HepG2 (cell line): ENCODE measurements at regions of chr16 and their contacts with region 1.

Region 1: DNA sequence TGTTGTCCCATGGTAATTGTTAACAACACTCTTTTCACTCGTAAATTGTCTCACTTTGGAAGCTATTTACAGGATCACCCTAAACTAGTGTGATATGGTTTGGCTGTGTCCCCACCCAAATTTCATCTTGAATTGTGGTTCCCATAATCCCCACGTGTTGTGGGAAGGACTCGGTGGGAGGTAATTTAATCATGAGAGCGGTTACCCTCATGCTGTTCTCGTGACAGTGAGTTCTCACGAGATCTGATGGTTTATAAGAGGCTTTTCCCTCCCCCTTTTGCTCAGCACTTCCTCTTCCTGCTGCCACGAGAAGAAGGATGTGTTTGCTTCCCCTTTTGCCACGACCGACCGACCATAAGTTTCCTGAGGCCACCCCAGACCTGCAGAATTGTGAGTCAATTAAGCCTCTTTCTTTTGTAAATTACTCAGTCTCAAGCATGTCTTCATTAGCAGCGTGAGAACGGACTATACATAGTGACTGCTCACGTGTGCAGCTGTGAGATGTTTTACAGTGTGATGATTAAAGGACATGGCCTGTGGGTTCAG is 34.4 kb downstream of the DNAH3 start:
- DNase-seq: peak; percentile 52
- ATAC-seq: peak; percentile 60
- H3K4me3 ChIP-seq: peak overlapping the region; percentile 25 to 55 (median 45); a peak in 5 of 6 replicates
- H3K27ac ChIP-seq: no peak overlapping the region
- H3K4me1 ChIP-seq: peaks cover 11% of the 10 kb centered on the region
- H3K27me3 ChIP-seq: peaks cover 3 to 12% of the 10 kb centered on the region in 2 experiments; a peak in 2 of 5 replicates
- CTCF ChIP-seq: no peak
- EP300 ChIP-seq: no peak
- POLR2A ChIP-seq: peak; percentile 40 to 55; a peak in 3 of 4 replicates
- RAD21 ChIP-seq: no peak

Region 2: DNA sequence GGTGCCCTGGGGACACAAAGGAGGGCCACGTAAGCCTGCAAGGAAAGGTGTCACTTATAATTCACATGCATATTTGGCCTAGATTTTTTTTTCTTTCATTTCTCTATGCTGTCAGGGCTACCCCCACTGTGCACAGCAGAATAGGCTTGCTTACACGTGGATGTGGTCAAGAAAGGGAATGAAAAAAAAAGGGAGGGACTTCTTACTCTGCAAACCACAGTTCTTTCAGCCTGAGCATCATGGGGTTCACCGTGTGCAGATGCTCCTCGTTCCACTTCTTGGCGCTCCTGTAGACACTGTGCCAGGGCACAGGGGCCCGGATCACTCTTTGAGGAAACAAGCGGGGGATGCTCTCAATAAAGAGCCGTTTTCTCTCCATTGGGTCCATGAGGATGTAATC is 17.8 kb after region 1 on chr16:
- CTCF ChIA-PET with region 1: no interaction called
- POLR2A ChIA-PET with region 1: no interaction called
- in situ Hi-C with region 1: no loop called
- intact Hi-C with region 1: loop called (anchors 2 kb)
- DNase-seq: no peak
- ATAC-seq: no peak
- H3K4me3 ChIP-seq: no peak overlapping the region
- H3K27ac ChIP-seq: no peak overlapping the region
- H3K4me1 ChIP-seq: no peaks in the 10 kb centered on the region
- H3K27me3 ChIP-seq: peaks cover 4 to 25% of the 10 kb centered on the region in 2 experiments; a peak in 2 of 5 replicates
- CTCF ChIP-seq: no peak
- EP300 ChIP-seq: no peak
- POLR2A ChIP-seq: no peak
- RAD21 ChIP-seq: no peak